ENCODE measurements at regions of chr17 and their contacts with region 1.

Region 1: DNA sequence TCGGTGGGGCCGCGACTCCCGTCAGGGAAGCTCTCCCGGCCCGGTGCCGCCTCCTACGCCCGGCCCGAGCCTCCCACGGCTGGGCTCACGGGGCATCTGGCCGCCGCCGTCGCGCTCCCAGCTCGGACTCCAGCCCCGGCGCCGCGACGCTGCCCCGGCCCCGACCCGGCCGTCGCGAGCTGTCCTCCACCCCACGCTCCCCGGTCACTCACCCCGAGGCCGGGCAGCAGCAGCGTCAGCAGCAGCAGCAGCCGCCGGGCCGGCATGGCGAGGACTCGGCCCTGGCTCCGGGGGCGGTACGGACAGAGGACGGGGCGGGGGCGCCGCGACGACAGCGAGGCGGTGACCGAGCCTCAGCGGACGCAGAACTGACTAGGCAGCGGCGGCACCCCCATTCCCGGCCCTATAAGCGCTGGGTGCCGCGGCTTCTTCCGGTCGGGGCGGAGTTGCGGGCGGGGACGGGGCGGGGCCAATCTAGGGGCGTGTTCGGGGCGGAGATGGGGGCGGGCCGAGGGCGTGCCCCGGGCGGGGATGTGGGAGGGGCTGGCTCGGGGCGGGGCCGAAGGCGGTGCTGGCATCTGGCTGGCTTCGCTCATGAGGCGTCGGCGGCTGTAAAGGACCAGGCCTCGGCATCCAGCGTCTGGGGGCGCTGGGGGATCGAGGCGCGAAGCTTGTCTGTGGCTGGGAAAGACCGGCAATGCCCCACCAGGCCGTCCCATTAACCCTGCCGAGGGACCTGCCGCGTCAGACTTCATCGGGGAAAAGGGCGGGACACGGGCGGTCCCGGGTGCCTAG is at the start of gene ERN1:
- DNase-seq: peak; percentile 92
- ATAC-seq: peak; percentile 87
- H3K4me3 ChIP-seq: peak within 1 kb of the TSS; percentile 32 to 80 (median 66)
- H3K4me3 Mint-ChIP-seq: peak within 1 kb of the TSS; percentile 89
- H3K27ac ChIP-seq: peak within 1 kb of the TSS; percentile 72 to 76
- H3K27ac Mint-ChIP-seq: peak within 1 kb of the TSS; percentile 89
- H3K4me1 ChIP-seq: peaks cover 13 to 23% of the 10 kb centered on the region in 2 donors
- H3K4me1 Mint-ChIP-seq: peaks cover 21% of the 10 kb centered on the region
- H3K27me3 ChIP-seq: no peaks in the 10 kb centered on the region
- H3K27me3 Mint-ChIP-seq: no peaks in the 10 kb centered on the region
- CTCF ChIP-seq: no peak
- total RNA-seq, gene ERN1: 19.4 and 24.7 TPM in 2 replicates

Region 2: GRCh38 chr17:63827002-63827771 is 302.8 kb before region 1 on chr17 and contains the starts of genes FTSJ3 and PSMC5:
- CTCF ChIA-PET with region 1: no interaction called
- POLR2A ChIA-PET with region 1: no interaction called
- intact Hi-C with region 1: loop called (anchors 1 kb)
- DNase-seq: peak; percentile 98
- ATAC-seq: peak; percentile 95
- H3K4me3 ChIP-seq: peak within 1 kb of the TSS; percentile 78 to 92 (median 81)
- H3K4me3 Mint-ChIP-seq: peak within 1 kb of the TSS; percentile 98
- H3K27ac ChIP-seq: peak within 1 kb of the TSS; percentile 70 to 92
- H3K27ac Mint-ChIP-seq: peak within 1 kb of the TSS; percentile 98
- H3K4me1 ChIP-seq: peaks cover 38 to 53% of the 10 kb centered on the region in 2 donors
- H3K4me1 Mint-ChIP-seq: peaks cover 73% of the 10 kb centered on the region
- H3K27me3 ChIP-seq: no peaks in the 10 kb centered on the region
- H3K27me3 Mint-ChIP-seq: no peaks in the 10 kb centered on the region
- CTCF ChIP-seq: peak; percentile 72
- total RNA-seq, gene FTSJ3: 75.9 and 78.2 TPM in 2 replicates
- total RNA-seq, gene PSMC5: 84.7 and 87.1 TPM in 2 replicates

Region 3: DNA sequence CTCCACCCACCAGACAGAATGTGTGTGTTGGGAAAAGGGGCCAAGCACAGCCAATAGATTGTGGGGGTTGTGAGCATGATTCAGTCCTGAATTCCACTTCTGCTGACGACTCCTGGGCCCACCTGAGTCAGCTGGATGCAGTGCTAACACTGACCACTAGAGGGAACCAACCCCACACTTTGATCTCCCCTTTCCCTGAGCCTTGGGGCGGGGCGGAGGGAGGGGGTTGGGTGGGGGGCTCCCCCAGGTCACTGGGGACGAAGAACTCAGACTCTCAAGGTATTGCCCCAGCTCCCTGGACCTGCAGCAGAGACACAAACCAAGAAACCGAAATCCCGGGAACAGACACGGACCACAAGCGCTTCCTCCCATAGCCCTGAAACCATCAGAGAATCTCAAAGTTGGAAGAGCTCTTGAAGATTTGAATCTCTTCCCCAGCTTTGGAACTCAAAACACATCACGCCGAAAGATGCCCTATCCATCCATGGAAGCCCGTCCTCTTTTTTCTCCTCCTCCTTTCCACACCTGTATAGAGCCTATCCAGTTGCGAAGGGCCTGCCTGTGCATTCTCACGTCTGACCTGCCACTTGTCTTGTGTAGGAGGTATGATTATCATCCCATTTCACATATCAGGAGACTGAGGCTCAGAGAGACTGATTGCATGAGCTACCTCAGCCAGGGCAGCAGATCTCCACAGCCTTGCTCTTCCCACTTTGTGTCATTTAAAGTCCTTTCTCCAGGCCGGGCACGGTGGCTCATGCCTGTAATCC is 218.1 kb before region 1 on chr17:
- CTCF ChIA-PET with region 1: interaction called, 122 read pairs
- POLR2A ChIA-PET with region 1: no interaction called
- intact Hi-C with region 1: loop called (anchors 1 kb)
- DNase-seq: peak; percentile 77
- ATAC-seq: peak; percentile 55
- H3K4me3 ChIP-seq: no peak overlapping the region
- H3K4me3 Mint-ChIP-seq: no peak overlapping the region
- H3K27ac ChIP-seq: no peak overlapping the region
- H3K27ac Mint-ChIP-seq: peak overlapping the region; percentile 50
- H3K4me1 ChIP-seq: peaks cover 28 to 41% of the 10 kb centered on the region in 2 donors
- H3K4me1 Mint-ChIP-seq: peaks cover 41% of the 10 kb centered on the region
- H3K27me3 ChIP-seq: peaks cover 0 to 5% (median 0%) of the 10 kb centered on the region in 4 experiments
- H3K27me3 Mint-ChIP-seq: peaks cover 8% of the 10 kb centered on the region
- CTCF ChIP-seq: peak; percentile 82

Region 4: GRCh38 chr17:63954402-63955063 is 175.4 kb before region 1 on chr17:
- CTCF ChIA-PET with region 1: interaction called, 18 read pairs
- POLR2A ChIA-PET with region 1: interaction called, 5 read pairs
- intact Hi-C with region 1: loop called (anchors 5 kb)
- DNase-seq: peak; percentile 81
- ATAC-seq: peak; percentile 87
- H3K4me3 ChIP-seq: peak overlapping the region in 1 of 5 experiments; percentile 15
- H3K4me3 Mint-ChIP-seq: peak overlapping the region; percentile 81
- H3K27ac ChIP-seq: peak overlapping the region; percentile 79 to 82
- H3K27ac Mint-ChIP-seq: peak overlapping the region; percentile 96
- H3K4me1 ChIP-seq: peaks cover 36 to 58% of the 10 kb centered on the region in 2 donors
- H3K4me1 Mint-ChIP-seq: peaks cover 30% of the 10 kb centered on the region
- H3K27me3 ChIP-seq: no peaks in the 10 kb centered on the region
- H3K27me3 Mint-ChIP-seq: no peaks in the 10 kb centered on the region
- CTCF ChIP-seq: no peak

Region 5: DNA sequence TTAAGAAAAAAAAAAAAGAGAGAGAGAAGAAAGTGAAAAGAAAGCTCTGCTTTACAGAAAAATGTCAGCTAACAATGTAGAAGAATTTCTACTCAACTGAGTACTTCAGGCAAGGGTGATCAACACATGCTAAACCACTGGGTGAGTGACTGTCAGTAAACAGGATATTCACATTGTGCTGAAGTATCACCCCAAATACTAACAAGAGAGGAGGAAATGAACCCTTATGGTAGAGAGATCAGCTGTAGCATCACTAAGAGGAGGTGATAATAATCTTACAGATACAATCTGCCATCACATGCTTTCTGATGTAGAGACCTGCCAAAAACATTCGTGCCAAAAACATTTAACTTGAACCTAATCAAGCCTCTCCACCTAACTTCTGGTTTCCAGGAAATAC is 78.8 kb before region 1 on chr17:
- CTCF ChIA-PET with region 1: interaction called, 10 read pairs
- POLR2A ChIA-PET with region 1: no interaction called
- intact Hi-C with region 1: no loop called
- DNase-seq: no peak
- ATAC-seq: no peak
- H3K4me3 ChIP-seq: no peak overlapping the region
- H3K4me3 Mint-ChIP-seq: no peak overlapping the region
- H3K27ac ChIP-seq: no peak overlapping the region
- H3K27ac Mint-ChIP-seq: no peak overlapping the region
- H3K4me1 ChIP-seq: peaks cover 5 to 13% of the 10 kb centered on the region in 2 donors
- H3K4me1 Mint-ChIP-seq: peaks cover 10% of the 10 kb centered on the region
- H3K27me3 ChIP-seq: no peaks in the 10 kb centered on the region
- H3K27me3 Mint-ChIP-seq: no peaks in the 10 kb centered on the region
- CTCF ChIP-seq: no peak

Region 6: DNA sequence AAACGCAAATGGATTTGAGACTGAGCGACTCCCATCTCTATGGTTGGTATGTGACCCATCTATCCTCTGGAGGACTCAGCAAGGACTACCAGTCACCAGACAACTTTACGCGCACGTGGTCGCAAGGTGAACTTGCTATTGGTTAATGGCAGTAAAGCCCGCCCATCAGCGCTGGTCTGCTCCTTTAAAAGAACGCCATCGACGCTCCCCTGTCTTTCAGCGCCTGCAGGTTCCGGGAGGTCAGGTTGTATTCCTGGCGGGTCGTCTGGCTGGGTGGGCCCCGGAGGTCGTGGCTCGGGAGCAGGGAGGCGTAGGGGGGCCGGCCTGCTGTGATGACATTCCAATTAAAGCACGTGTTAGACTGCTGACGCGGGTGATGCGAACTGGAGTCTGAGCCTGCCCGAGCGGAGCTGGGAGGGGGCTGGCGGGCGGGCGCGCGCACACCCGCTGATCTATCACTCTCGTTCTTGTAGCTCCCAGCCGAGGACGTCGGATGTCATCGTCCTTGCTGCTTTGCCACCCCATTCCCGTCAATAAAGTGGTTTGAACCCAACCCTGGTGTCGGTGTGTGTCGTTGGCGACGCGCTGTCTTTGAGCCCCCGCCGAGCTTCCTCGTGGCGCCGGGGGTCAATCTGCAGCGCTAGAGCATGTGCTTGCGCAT is 15.9 kb after region 1 on chr17:
- CTCF ChIA-PET with region 1: interaction called, 67 read pairs
- POLR2A ChIA-PET with region 1: interaction called, 22 read pairs
- intact Hi-C with region 1: loop called (anchors 1 kb)
- DNase-seq: peak; percentile 98
- ATAC-seq: peak; percentile 93
- H3K4me3 ChIP-seq: peak overlapping the region; percentile 77 to 95 (median 92)
- H3K4me3 Mint-ChIP-seq: no peak overlapping the region
- H3K27ac ChIP-seq: peak overlapping the region; percentile 86 to 88
- H3K27ac Mint-ChIP-seq: no peak overlapping the region
- H3K4me1 ChIP-seq: peaks cover 14 to 18% of the 10 kb centered on the region in 2 donors
- H3K4me1 Mint-ChIP-seq: peaks cover 15% of the 10 kb centered on the region
- H3K27me3 ChIP-seq: no peaks in the 10 kb centered on the region
- H3K27me3 Mint-ChIP-seq: no peaks in the 10 kb centered on the region
- CTCF ChIP-seq: no peak